Activated naive CD4-positive, alpha-beta T cell treated with anti-CD3 and anti-CD28 coated beads, Interleukin-2, amount 10 ng/mL, durations not matched to agents 7 days and 5 days (primary cell): ENCODE measurements at regions of chr17 and their contacts with region 1.

Region 1: GRCh38 chr17:8785547-8786413 is 13.4 kb downstream of the MFSD6L start:
- DNase-seq: peak; percentile 77
- H3K4me3 Mint-ChIP-seq: no peak overlapping the region
- H3K27ac Mint-ChIP-seq: no peak overlapping the region
- H3K4me1 Mint-ChIP-seq: no peaks in the 10 kb centered on the region
- H3K27me3 Mint-ChIP-seq: peaks cover 17% of the 10 kb centered on the region

Region 2: DNA sequence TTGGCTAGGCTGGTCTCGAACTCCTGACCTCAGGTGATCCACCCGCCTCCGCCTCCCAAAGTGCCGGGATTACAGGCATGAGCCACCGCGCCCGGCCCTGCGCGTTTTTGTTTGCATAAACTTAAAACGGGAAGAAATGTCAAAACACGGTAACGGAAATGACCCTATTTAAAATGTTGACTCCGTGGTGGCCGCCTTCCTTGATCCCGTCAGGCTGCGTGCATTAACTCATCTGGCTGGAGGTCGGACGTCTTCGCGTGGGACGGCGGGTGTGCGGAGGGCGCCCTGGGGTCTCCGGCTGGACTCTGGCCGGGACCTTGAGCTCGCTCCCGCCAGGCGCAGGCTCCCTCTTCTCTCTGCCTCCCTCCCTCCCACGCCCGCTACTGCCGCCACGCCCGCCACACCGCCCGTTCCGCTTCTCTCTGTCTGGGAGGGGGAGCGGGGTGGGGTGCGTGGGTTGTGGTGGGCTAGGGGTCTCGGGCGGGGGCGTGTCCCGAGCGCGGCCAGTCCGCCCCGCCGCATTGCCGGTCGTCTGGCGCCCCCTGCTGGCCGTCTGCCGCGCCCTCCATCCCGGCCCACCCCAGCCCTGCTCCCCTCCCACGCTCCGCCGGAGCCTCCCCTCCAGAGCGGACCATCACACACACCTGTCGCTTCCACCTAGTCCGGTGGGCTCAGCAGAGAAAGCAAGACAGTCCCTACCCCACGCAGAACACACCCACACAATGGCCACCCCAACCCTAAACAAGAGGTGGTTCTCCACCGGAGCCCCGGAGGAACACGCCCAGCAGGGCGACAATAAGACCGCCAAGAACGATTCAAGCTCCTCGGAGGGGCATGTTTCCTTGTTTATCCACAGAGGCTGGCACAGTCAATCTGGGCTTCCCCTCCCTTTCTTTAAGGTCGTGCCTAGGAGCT is 39.9 kb before region 1 on chr17:
- CTCF ChIA-PET with region 1: interaction called, 11 read pairs
- DNase-seq: peak; percentile 81
- H3K4me3 Mint-ChIP-seq: peak overlapping the region; percentile 83
- H3K27ac Mint-ChIP-seq: peak overlapping the region; percentile 92
- H3K4me1 Mint-ChIP-seq: peaks cover 26% of the 10 kb centered on the region
- H3K27me3 Mint-ChIP-seq: peaks cover 11% of the 10 kb centered on the region

Region 3: GRCh38 chr17:8766731-8767130 is 19.0 kb before region 1 on chr17:
- CTCF ChIA-PET with region 1: no interaction called
- DNase-seq: no peak
- H3K4me3 Mint-ChIP-seq: no peak overlapping the region
- H3K27ac Mint-ChIP-seq: no peak overlapping the region
- H3K4me1 Mint-ChIP-seq: no peaks in the 10 kb centered on the region
- H3K27me3 Mint-ChIP-seq: peaks cover 26% of the 10 kb centered on the region

Region 4: GRCh38 chr17:8806926-8807550 is 21.3 kb after region 1 on chr17:
- CTCF ChIA-PET with region 1: interaction called, 10 read pairs
- DNase-seq: no peak
- H3K4me3 Mint-ChIP-seq: no peak overlapping the region
- H3K27ac Mint-ChIP-seq: no peak overlapping the region
- H3K4me1 Mint-ChIP-seq: peaks cover 6% of the 10 kb centered on the region
- H3K27me3 Mint-ChIP-seq: peaks cover 22% of the 10 kb centered on the region